Calu3 (cell line): ENCODE measurements at regions of chr1 and their contacts with region 1.

Region 1: GRCh38 chr1:62484824-62485468 is 48.1 kb downstream of the USP1 start:
- DNase-seq: no peak
- H3K4me3 Mint-ChIP-seq: no peak overlapping the region
- H3K27ac Mint-ChIP-seq: no peak overlapping the region
- H3K4me1 Mint-ChIP-seq: no peaks in the 10 kb centered on the region
- H3K27me3 Mint-ChIP-seq: no peaks in the 10 kb centered on the region
- CTCF ChIP-seq: no peak

Region 2: DNA sequence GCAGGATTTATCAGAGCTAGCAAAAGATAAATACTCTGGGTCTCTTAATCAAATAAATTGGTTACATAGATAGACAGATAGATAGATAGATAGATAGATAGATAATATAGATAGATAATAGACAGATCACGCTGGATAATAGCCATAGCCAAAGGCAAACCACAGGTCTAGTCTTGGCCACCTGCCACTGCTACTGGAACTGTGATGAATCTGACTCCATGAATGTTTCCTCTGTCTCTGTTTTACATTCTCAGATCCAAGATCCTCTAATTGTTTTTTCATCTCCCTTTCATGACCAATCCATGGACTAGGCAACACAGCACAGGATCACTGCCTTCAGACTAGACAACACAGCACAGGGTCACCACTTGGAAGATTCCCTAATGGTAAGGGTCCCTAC is 1847.3 kb before region 1 on chr1:
- CTCF ChIA-PET with region 1: no interaction called
- intact Hi-C with region 1: loop called (anchors 10 kb)
- DNase-seq: no peak
- H3K4me3 Mint-ChIP-seq: no peak overlapping the region
- H3K27ac Mint-ChIP-seq: no peak overlapping the region
- H3K4me1 Mint-ChIP-seq: no peaks in the 10 kb centered on the region
- H3K27me3 Mint-ChIP-seq: no peaks in the 10 kb centered on the region
- CTCF ChIP-seq: no peak

Region 3: GRCh38 chr1:62247391-62248168 is 237.4 kb before region 1 on chr1:
- CTCF ChIA-PET with region 1: no interaction called
- intact Hi-C with region 1: no loop called
- DNase-seq: peak; percentile 15
- H3K4me3 Mint-ChIP-seq: no peak overlapping the region
- H3K27ac Mint-ChIP-seq: no peak overlapping the region
- H3K4me1 Mint-ChIP-seq: no peaks in the 10 kb centered on the region
- H3K27me3 Mint-ChIP-seq: peaks cover 73% of the 10 kb centered on the region
- CTCF ChIP-seq: no peak

Region 4: DNA sequence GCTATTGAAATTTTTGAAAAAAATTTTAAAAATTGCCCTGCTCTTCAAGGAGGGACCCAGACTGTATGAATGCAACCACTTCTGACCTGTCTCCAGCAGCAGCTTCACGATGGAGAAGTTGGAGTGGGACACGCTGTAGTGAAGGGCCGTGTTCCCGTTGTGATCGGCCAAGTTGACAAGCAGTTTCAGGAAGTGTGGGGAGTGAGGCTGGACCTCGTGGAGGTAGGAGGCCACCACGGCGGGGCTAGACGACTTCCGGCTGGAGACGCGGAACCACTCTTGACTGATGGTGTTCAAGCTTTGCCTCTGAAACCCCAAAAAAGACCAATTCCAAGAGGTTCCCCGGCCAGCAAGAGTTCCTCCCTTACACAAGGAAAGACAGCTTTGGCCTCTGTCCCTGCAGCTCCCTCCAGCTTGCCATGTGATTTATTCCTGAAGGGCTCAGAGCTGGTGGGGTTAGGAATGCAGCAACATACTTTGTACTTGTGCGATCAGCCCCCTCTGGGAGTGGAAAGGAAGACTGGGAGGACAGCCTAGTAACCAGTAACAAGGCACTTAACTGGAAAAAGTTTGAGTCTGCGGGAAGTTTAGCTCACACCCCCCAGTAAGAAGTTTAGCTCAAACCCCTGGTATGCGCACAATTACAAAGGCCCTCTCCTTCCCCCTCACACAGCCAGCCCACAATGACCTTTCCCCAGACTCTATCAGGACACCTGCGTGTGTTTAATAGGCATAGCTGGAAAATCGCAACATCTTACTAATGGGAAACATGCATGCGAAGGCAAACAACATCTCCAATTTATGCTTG is 221.7 kb before region 1 on chr1:
- CTCF ChIA-PET with region 1: no interaction called
- intact Hi-C with region 1: no loop called
- DNase-seq: no peak
- H3K4me3 Mint-ChIP-seq: no peak overlapping the region
- H3K27ac Mint-ChIP-seq: no peak overlapping the region
- H3K4me1 Mint-ChIP-seq: no peaks in the 10 kb centered on the region
- H3K27me3 Mint-ChIP-seq: peaks cover 60% of the 10 kb centered on the region
- CTCF ChIP-seq: no peak

Region 5: GRCh38 chr1:62962901-62963776 is 478.2 kb after region 1 on chr1:
- CTCF ChIA-PET with region 1: no interaction called
- intact Hi-C with region 1: no loop called
- DNase-seq: peak; percentile 61
- H3K4me3 Mint-ChIP-seq: no peak overlapping the region
- H3K27ac Mint-ChIP-seq: no peak overlapping the region
- H3K4me1 Mint-ChIP-seq: peaks cover 13% of the 10 kb centered on the region
- H3K27me3 Mint-ChIP-seq: peaks cover 19% of the 10 kb centered on the region
- CTCF ChIP-seq: peak; percentile 56